Left ventricle myocardium superior (tissue), 1 donor: ENCODE measurements at regions of chr3 and their contacts with region 1.

Region 1: GRCh38 chr3:64030741-64031140 is 7.4 kb upstream of the PSMD6 start:
- DNase-seq: peak; percentile 76
- ATAC-seq: peak; percentile 91

Region 2: GRCh38 chr3:63951492-63952247 is 79.1 kb before region 1 on chr3:
- intact Hi-C with region 1: no loop called
- DNase-seq: no peak
- ATAC-seq: no peak

Region 3: DNA sequence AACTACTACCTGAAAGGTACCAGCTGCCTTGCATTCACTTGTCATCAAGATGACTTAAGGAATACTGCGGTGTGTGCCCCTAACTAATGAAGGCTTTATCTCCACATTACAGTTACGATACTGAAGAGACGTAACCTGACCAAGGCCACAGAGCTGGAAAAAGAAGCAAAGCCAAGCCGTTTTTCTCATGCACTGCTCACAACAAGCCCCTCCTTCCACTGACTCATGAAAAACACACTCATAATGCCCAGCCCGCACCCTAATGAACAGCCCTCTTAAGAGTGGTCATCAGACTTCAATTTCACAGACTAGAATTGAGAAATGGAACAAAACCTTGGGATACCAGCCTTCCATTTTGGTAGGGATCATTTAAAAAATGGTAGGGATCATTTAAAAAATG is 19.1 kb before region 1 on chr3:
- intact Hi-C with region 1: no loop called
- DNase-seq: no peak
- ATAC-seq: peak; percentile 23

Region 4: GRCh38 chr3:64399205-64399800 is 368.6 kb after region 1 on chr3:
- intact Hi-C with region 1: loop called (anchors 2 kb)
- DNase-seq: no peak
- ATAC-seq: peak; percentile 72

Region 5: GRCh38 chr3:64484289-64484992 is 453.7 kb after region 1 on chr3:
- intact Hi-C with region 1: loop called (anchors 5 kb)
- DNase-seq: peak; percentile 76
- ATAC-seq: peak; percentile 94